Heart right ventricle (tissue), 16 donors: ENCODE measurements at regions of chr9 and their contacts with region 1.

Region 1: GRCh38 chr9:96486368-96487028 is 36.5 kb downstream of the HABP4 start:
- DNase-seq: peak; percentile 68 to 75
- ATAC-seq: peak; percentile 50 to 88 (median 82)
- H3K4me3 ChIP-seq: peak overlapping the region in 1 of 10 donors; percentile 6
- H3K27ac ChIP-seq: peak overlapping the region; percentile 13 to 86 (median 62)
- H3K4me1 ChIP-seq: peaks cover 4 to 47% (median 34%) of the 10 kb centered on the region in 9 donors
- H3K27me3 ChIP-seq: no peaks in the 10 kb centered on the region
- CTCF ChIP-seq: no peak

Region 2: DNA sequence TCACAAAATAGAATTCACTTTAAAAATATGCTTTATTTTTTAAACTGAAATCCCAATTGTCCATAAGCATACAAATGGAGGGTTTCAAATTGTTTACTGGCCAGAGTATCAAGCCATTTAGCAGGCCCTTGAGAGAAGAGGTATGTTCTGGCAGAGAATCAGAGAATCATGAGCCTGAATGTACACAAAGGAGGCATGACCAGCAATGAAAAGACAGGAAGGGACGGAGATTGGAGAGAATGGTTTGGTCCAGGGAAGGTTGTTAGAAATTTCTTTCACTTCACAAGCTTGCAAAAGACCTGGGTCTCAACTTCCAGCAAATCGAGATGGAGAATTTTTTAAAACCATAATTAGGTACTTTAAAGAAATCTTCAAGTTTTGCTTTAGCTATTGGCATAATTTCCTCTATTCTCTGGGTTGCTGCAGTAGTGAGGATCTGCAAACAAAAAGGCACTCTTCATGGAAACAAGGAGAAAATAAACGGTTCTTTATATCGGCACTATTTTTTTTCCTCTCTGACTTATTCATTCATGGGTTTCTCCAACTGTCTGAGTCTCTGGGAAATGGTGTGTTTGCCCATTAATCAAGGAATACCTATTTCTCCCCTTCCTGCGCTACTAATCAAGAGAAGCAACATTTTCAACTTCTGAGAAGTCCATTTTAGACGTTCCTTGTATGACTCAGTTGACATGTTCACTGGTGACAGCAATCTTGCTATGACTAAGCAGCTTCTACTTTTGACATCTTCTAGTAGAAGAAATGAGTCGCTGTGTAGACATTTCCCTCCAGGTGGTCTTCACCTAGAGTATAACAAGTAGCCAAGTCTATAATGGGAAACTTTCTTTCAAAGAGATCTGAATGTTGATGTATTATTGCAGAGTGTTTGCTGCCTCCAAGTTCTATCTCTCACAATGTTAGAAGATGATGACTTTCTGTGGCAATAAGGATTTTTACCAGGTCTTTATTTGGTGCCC is 634.2 kb before region 1 on chr9:
- intact Hi-C with region 1: no loop called
- DNase-seq: no peak
- ATAC-seq: no peak
- H3K4me3 ChIP-seq: no peak overlapping the region
- H3K27ac ChIP-seq: no peak overlapping the region
- H3K4me1 ChIP-seq: peaks cover 0 to 9% (median 0%) of the 10 kb centered on the region in 9 donors
- H3K27me3 ChIP-seq: no peaks in the 10 kb centered on the region
- CTCF ChIP-seq: no peak

Region 3: DNA sequence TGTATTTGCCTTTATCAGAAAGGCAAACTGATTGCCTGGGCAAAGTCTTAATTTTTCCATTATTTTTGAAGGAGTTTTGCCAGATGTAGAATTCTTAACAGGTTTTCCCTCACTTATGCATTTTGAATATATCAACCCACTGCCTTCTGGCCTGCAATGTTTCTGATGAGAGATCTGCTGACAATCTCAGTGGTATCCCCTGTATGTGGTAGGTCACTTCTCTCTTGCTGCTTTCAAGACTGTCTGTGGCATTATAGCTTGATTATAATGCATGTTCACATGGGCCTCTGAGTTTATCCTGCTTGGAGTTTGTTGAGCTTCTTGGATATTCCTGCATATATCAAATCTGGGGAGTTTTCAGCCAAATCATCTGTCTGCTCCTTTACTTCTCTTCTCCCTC is 45.7 kb after region 1 on chr9:
- intact Hi-C with region 1: loop called in 1 of 10 experiments (anchors 5 kb)
- DNase-seq: no peak
- ATAC-seq: no peak
- H3K4me3 ChIP-seq: no peak overlapping the region
- H3K27ac ChIP-seq: no peak overlapping the region
- H3K4me1 ChIP-seq: no peaks in the 10 kb centered on the region
- H3K27me3 ChIP-seq: no peaks in the 10 kb centered on the region
- CTCF ChIP-seq: no peak